ENCODE measurements at regions of chr10 and their contacts with region 1.

Region 1: DNA sequence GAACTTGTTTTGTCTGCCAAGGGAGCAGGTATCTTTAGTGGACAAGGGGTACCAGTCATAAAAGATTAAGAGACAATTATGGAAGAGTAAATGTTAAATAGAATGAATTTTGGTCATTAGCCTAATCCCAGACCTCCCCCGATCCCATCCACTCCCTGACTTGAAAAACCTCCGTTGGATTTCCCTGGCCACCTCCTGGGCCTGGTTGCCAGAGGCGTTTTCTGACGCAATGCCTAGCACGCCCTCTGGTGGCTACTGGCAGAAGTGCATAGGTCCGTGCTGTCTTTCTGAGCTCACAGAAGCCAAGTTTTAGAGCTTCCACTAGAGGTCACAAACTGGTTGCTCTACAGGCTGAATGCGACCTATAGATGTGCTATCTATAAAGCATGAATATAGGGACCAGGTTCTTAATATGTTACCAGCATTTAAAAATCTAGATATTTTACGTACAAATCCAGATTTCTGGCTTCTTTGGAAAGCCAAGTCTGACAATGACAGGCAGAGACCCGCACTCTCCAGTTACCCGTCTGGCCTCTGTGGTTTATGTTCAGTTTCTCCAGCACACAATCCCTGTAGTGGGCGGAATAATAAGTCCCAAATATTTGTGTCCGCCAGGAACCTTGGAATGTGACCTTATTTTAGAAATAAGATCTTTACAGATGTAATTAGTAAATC is 39.8 kb downstream of the SPOCK2 start:
- DNase-seq: peak; percentile 86
- CTCF ChIP-seq: peak; percentile 96

Region 2: DNA sequence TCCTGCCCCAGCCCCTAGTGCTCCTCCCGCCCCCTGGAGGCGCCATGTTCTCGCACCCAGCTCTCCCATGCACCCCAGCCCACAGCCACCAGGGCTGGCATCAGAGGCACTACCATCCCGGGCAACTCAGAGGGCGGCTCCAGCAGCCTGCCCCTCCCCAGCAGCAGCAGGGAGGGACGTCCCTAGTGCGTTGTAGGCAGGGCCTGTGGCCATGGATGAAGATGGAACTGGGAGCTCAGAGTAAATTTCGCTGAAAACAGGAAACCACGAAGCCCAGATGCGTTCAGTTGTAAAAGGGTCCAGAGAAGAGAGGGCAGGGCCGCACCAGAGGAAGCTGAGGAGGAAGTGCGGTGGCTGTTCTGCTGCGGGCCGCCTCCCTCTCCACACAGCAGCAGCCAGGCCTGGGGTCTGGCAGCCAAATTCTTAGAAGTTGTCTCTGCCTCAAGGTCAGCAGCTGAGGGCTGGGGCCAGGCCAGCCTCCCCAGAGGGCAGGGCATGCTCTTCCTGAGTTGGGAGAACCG is 299.9 kb before region 1 on chr10:
- in situ Hi-C with region 1: no loop called
- DNase-seq: peak; percentile 75
- CTCF ChIP-seq: no peak

Region 3: GRCh38 chr10:71899665-71900412 is 148.7 kb before region 1 on chr10:
- in situ Hi-C with region 1: loop called (anchors 5 kb)
- DNase-seq: no peak
- CTCF ChIP-seq: no peak

Region 4: GRCh38 chr10:72223743-72224101 is 175.1 kb after region 1 on chr10:
- in situ Hi-C with region 1: loop called (anchors 10 kb)
- DNase-seq: no peak
- CTCF ChIP-seq: no peak